ENCODE measurements at regions of chr12 and their contacts with region 1.

Region 1: GRCh38 chr12:89244536-89244935 is 107.8 kb downstream of the DUSP6 start:
- DNase-seq: peak; percentile 47
- H3K4me3 Mint-ChIP-seq: peak overlapping the region; percentile 35
- H3K27ac Mint-ChIP-seq: peak overlapping the region; percentile 85
- H3K4me1 Mint-ChIP-seq: peaks cover 67% of the 10 kb centered on the region
- H3K27me3 Mint-ChIP-seq: no peaks in the 10 kb centered on the region

Region 2: DNA sequence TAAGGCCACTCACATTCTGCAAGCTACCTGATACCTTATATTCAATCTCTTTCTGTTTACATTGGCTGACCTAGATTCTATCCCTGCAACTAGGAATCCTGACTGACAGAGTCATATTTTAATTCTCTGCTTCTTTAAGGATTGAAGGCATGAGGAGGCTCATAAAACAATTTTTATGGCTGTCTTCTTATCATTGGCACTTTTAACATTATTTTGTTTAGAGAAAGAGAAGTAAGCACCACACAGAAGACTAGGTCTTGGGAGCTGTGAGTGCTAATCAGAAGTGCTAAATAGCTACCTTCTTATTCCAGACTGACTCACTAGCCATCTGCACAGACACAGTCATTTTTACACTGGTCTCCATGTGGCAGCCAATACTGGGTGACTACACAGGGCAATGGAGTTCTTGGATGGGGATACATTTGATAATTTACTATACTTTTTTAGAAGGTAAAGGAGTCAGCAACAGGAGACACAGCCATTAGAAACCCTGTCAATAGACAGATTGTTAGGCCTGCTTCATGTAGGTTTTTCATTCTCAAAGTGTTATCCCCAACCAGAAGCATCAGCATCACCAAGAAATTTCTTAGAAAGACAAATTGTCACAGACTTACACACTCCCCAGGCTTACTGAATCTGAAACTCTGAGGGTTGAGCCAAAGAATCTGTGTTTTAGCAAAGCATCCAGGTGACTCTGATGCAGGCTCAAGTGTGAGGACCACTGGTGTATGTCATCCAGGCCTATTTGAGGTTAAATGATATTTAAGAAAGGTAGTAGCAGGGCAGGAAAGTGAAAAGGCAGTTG is 106.3 kb before region 1 on chr12:
- intact Hi-C with region 1: loop called (anchors 1 kb)
- DNase-seq: no peak
- H3K4me3 Mint-ChIP-seq: no peak overlapping the region
- H3K27ac Mint-ChIP-seq: peak overlapping the region; percentile 68
- H3K4me1 Mint-ChIP-seq: peaks cover 39% of the 10 kb centered on the region
- H3K27me3 Mint-ChIP-seq: no peaks in the 10 kb centered on the region

Region 3: GRCh38 chr12:89225808-89226411 is 18.6 kb before region 1 on chr12:
- intact Hi-C with region 1: loop called (anchors 1 kb)
- DNase-seq: no peak
- H3K4me3 Mint-ChIP-seq: peak overlapping the region; percentile 70
- H3K27ac Mint-ChIP-seq: peak overlapping the region; percentile 100
- H3K4me1 Mint-ChIP-seq: peaks cover 67% of the 10 kb centered on the region
- H3K27me3 Mint-ChIP-seq: no peaks in the 10 kb centered on the region

Region 4: DNA sequence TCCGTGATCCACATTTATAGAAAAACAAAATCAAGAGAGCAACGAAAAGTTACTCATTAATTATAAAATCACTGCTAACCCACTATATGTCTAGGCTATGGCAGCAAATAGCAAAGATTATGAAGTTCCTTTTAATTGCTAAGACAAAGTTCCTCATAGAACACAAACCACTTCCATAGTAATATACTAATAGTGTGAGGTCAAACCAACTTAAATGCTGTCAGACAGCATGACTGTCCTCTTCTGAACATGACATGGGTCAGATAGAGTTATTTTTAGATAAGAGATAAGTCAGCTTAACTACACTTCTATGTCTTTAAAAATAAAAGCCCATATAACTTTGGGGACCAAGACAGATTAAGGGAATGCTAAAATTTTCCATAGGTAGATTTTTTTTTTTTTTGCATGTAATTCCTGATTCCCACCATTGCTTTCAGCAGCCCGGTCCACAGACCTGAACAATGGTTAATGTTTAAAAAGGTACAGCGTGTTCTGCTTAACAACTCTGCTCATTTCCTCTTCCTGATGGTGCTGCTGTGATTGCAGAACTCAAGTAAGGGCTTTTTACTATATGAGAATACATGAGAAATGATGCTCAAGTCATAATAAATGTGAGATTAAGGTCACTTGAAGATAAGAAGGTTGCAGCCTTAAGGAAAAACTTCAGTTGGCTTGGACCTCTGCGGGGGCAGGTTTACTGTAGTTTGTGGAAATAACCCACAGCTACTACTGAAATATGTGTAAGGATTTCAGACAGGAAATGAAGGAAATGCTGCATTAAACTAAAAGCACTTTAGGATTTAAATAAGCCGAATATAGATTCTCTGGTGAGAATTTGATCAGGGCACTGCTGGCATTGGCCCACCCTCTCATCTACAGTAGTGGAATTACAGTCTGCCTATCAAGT is 145.5 kb after region 1 on chr12:
- intact Hi-C with region 1: loop called (anchors 1 kb)
- DNase-seq: no peak
- H3K4me3 Mint-ChIP-seq: peak overlapping the region; percentile 2
- H3K27ac Mint-ChIP-seq: peak overlapping the region; percentile 87
- H3K4me1 Mint-ChIP-seq: peaks cover 33% of the 10 kb centered on the region
- H3K27me3 Mint-ChIP-seq: no peaks in the 10 kb centered on the region

Region 5: DNA sequence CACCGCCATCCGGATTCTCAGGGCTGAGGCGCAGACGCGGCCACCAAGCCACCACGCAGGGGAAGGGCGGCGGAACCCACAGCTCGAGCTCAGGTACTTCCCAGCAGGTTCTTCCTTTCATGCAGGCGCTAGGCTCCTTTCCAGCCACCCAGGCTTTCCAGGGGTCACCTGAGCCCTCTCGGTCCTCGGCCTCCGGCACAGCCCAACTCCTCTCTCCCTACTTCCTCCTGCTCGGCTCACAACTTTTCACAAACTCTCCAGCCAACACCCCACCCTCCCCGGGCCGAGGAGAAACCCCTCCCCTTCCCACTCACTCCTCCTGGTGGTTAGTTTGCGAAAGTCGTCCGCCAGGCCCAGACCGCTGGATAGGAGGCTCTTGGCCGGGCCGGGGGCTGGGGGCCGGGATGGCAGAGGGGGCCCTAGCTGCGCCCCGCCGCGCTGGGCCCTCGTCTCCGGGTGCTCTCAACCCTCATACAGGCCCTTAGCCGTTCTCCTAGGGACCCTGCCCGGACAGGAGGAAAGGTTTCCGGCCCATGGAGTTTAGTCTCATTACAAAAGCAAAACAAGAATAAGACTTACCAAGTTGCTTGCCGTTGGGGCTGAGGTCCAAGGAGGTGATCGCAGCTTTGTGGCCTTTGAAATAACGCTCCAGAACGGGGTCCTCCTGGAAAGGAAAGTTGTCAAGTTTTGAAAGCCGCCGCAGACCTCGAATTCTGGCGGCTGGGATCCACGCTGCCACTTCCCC is 280.2 kb after region 1 on chr12 and contains the start of gene GALNT4:
- intact Hi-C with region 1: loop called (anchors 5 kb)
- DNase-seq: peak; percentile 75
- H3K4me3 Mint-ChIP-seq: peak within 1 kb of the TSS; percentile 99
- H3K27ac Mint-ChIP-seq: peak within 1 kb of the TSS; percentile 99
- H3K4me1 Mint-ChIP-seq: peaks cover 51% of the 10 kb centered on the region
- H3K27me3 Mint-ChIP-seq: no peaks in the 10 kb centered on the region
- total RNA-seq, gene GALNT4: 8.8 and 9.1 TPM in 2 replicates

Measured in activated T-helper 2 cell treated with anti-CD3 and anti-CD28 coated beads, Interferon-gamma antibody, Interleukin-2, Interleukin-4, amounts not matched to agents 10 μg/mL and 5 μg/mL and 100 μg/mL, durations not matched to agents 14 hours and 24 hours and 36 hours (primary cell).